ENCODE measurements at regions of chr14 and their contacts with region 1.

Region 1: GRCh38 chr14:59507063-59507780 is 22.9 kb downstream of the JKAMP start:
- DNase-seq: peak; percentile 88
- ATAC-seq: peak; percentile 98
- H3K4me3 Mint-ChIP-seq: no peak overlapping the region
- H3K27ac Mint-ChIP-seq: no peak overlapping the region
- H3K4me1 Mint-ChIP-seq: peaks cover 8% of the 10 kb centered on the region
- H3K27me3 Mint-ChIP-seq: no peaks in the 10 kb centered on the region; the same call in 1 of the 2 replicates
- CTCF ChIP-seq: peak; percentile 84

Region 2: GRCh38 chr14:59454131-59454530 is 53.1 kb before region 1 on chr14:
- CTCF ChIA-PET with region 1: no interaction called
- POLR2A ChIA-PET with region 1: no interaction called
- DNase-seq: no peak
- ATAC-seq: no peak
- H3K4me3 Mint-ChIP-seq: no peak overlapping the region
- H3K27ac Mint-ChIP-seq: no peak overlapping the region
- H3K4me1 Mint-ChIP-seq: no peaks in the 10 kb centered on the region
- H3K27me3 Mint-ChIP-seq: no peaks in the 10 kb centered on the region
- CTCF ChIP-seq: no peak

Region 3: GRCh38 chr14:59464486-59465315 is 42.5 kb before region 1 on chr14:
- CTCF ChIA-PET with region 1: interaction called, 14 read pairs
- POLR2A ChIA-PET with region 1: no interaction called
- DNase-seq: peak; percentile 68
- ATAC-seq: peak; percentile 64
- H3K4me3 Mint-ChIP-seq: peak overlapping the region; percentile 83
- H3K27ac Mint-ChIP-seq: no peak overlapping the region
- H3K4me1 Mint-ChIP-seq: peaks cover 14% of the 10 kb centered on the region
- H3K27me3 Mint-ChIP-seq: peaks cover 22% of the 10 kb centered on the region
- CTCF ChIP-seq: no peak

Region 4: GRCh38 chr14:59492384-59492783 is 14.8 kb before region 1 on chr14:
- CTCF ChIA-PET with region 1: interaction called, 10 read pairs
- POLR2A ChIA-PET with region 1: no interaction called
- DNase-seq: no peak
- ATAC-seq: no peak
- H3K4me3 Mint-ChIP-seq: no peak overlapping the region
- H3K27ac Mint-ChIP-seq: no peak overlapping the region
- H3K4me1 Mint-ChIP-seq: no peaks in the 10 kb centered on the region
- H3K27me3 Mint-ChIP-seq: no peaks in the 10 kb centered on the region
- CTCF ChIP-seq: no peak

Region 5: DNA sequence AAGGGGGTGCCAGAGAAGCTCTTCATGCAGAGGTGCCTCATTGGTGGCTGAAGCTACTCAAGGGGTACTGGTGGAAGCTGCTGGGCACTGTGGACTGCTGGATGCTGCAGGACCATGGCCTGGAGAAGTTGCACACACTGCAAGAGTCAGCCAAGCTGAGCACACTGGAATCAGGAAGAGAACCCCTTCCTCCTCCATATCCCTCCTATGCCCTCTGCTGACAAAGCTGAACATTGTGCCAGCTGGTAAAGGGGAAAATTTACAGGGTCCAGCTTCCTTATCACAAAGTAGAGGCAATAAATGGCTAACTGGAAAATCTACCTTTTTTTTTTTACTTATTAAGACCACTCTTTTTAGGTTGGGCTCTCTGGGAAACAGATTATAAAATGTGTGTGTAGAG is 62.9 kb after region 1 on chr14:
- CTCF ChIA-PET with region 1: interaction called, 103 read pairs
- POLR2A ChIA-PET with region 1: no interaction called
- DNase-seq: no peak
- ATAC-seq: peak; percentile 73
- H3K4me3 Mint-ChIP-seq: no peak overlapping the region
- H3K27ac Mint-ChIP-seq: no peak overlapping the region
- H3K4me1 Mint-ChIP-seq: peaks cover 17% of the 10 kb centered on the region
- H3K27me3 Mint-ChIP-seq: no peaks in the 10 kb centered on the region
- CTCF ChIP-seq: no peak

Region 6: DNA sequence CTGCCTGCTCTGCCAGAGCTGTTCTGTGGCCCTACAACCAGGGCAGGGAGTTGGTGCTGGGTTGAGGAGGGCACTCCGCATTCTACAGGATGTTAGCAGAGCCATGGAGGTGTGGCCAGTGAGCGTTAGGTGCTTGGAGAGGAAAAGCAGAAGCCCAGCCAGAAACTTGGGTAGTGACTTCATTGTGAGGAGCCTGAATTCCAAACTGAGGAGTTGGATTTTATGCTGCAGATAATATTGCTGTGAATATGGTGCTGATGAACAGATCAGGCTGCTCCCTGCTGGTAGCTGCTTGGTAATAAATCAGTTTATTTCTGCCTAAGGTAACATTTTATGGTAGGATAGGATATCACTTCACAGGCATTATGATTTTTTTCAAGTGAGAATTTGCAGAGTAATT is 76.5 kb after region 1 on chr14:
- CTCF ChIA-PET with region 1: interaction called, 169 read pairs
- POLR2A ChIA-PET with region 1: no interaction called
- DNase-seq: no peak
- ATAC-seq: peak; percentile 75
- H3K4me3 Mint-ChIP-seq: no peak overlapping the region
- H3K27ac Mint-ChIP-seq: no peak overlapping the region; the same call in 1 of the 2 replicates
- H3K4me1 Mint-ChIP-seq: peaks cover 9% of the 10 kb centered on the region; the same call in 1 of the 2 replicates
- H3K27me3 Mint-ChIP-seq: no peaks in the 10 kb centered on the region
- CTCF ChIP-seq: no peak

Region 7: DNA sequence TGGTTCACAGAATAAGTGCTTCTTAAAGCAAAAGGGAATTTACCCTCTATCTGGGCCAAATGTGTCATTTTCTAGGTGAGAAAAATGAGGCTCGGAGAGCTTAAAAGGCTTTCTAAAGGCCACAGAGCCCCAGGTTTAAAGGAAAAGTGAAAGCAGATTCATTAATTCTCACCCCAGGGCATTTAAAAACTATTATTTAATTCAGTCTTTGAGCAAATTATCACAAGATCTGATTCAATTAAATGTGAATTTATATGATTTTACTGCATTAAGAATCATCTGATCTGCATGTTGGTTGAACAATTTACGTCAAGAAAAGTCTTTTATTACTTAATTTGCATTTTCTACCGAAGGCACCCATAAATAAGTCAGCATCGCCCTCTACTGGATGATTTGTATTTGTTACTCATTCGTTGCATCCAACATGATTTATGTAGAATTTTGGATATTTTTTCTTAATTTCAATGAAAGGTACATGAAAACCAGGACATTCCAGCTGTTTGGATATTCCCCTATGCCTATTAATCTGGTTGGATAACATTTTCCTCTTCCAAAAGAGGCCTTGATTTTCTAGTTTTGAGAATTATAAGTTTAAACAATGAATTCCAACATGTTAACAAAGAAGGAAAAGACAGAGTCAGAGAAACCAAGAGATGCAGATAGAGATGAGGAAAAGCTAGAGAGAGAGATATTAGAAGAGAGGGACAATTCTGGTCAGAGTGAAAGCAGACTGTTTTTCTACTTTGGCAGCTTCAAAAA is 677.1 kb after region 1 on chr14:
- CTCF ChIA-PET with region 1: interaction called, 16 read pairs
- POLR2A ChIA-PET with region 1: no interaction called
- DNase-seq: no peak
- ATAC-seq: no peak
- H3K4me3 Mint-ChIP-seq: peak overlapping the region; percentile 44
- H3K27ac Mint-ChIP-seq: no peak overlapping the region
- H3K4me1 Mint-ChIP-seq: peaks cover 14% of the 10 kb centered on the region
- H3K27me3 Mint-ChIP-seq: no peaks in the 10 kb centered on the region
- CTCF ChIP-seq: peak; percentile 50

Measured in WTC11 (cell line).